ENCODE measurements at regions of chr15 and their contacts with region 1.

Region 1: DNA sequence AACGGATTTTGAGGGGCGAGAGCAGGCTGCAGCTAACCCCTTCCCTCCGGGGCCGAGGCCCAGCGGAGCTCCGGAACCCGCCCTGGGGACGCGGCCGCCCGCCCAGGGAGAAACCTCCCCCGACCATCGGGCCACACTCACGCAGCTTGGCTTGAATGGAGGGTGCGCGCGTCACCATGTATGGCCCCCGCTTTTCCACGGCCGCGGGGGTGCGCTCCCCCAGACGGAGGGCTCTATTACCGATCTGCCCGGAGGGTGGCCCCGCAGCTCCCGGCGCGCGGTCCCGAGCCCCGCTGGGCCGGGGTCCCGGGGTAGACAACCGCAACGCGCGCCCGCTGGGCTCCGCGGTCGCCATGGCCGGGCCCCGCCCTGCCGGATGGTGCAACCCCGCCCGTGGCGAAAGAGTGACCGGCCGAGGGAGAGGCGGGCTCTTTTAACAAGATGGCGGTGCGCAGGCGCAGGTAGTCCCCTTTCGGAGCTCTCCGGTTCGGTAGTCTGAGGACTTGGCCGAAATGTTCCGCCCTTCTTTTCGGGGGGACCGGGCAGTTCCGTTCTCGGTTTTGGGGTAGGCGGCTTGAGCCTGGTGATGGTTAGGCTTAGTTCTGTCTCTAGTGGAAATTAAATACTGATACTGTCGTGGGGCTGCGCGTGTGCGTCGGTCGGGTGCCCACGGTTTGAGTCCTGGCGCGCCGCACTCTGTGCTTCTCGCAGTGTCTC is at the start of gene FAM219B:
- DNase-seq: peak; percentile 84
- H3K4me3 Mint-ChIP-seq: peak within 1 kb of the TSS; percentile 91
- H3K27ac Mint-ChIP-seq: peak within 1 kb of the TSS; percentile 87
- H3K4me1 Mint-ChIP-seq: peaks cover 45% of the 10 kb centered on the region
- H3K27me3 Mint-ChIP-seq: no peaks in the 10 kb centered on the region
- total RNA-seq, gene FAM219B: 103 to 116 TPM

Region 2: GRCh38 chr15:74768771-74769342 is 137.7 kb before region 1 on chr15:
- CTCF ChIA-PET with region 1: interaction called, 50 read pairs
- POLR2A ChIA-PET with region 1: interaction called, 3 read pairs
- DNase-seq: peak; percentile 71
- H3K4me3 Mint-ChIP-seq: no peak overlapping the region
- H3K27ac Mint-ChIP-seq: no peak overlapping the region
- H3K4me1 Mint-ChIP-seq: peaks cover 19% of the 10 kb centered on the region
- H3K27me3 Mint-ChIP-seq: peaks cover 8% of the 10 kb centered on the region

Region 3: DNA sequence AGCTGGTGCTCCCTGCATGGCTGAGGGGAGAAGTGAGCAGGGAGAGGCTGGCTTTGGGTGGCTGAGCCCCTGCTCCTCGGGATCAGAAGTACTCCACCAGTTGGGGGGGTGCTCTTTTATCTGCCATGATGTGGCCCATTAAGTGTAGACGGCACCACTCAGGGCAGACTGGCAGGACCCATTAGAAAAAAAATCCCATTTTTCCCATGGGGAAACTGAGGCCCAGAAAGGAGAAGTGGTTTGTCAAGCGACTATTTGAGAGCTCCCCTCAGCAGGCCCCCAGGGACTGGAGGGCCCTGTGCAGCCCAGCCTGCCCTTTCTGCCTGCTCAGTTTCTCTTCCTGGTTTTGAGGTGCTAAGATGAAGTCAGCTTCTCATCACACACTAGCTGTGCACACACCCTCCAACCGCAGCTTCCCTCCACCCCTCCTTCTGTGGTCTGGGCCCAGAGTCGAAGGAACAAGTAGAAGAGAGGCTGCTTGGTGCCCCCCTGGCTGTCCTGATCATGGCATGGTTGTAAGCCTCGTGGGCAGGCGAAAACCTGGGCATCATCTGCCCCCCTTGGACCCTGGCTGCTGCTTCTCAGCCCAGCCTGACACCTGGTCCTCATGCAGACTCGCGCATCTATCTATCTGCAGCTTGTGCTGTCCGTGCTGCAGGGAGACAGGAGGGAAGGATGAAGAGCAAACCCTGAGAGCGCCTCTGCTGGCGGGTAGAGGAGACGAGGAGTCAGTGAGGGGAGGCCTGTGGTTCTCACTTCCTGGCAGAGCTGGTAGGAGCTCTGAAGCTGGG is 119.2 kb before region 1 on chr15:
- CTCF ChIA-PET with region 1: interaction called, 22 read pairs
- POLR2A ChIA-PET with region 1: interaction called, 16 read pairs
- DNase-seq: peak; percentile 95
- H3K4me3 Mint-ChIP-seq: peak overlapping the region; percentile 85
- H3K27ac Mint-ChIP-seq: peak overlapping the region; percentile 97
- H3K4me1 Mint-ChIP-seq: peaks cover 62% of the 10 kb centered on the region
- H3K27me3 Mint-ChIP-seq: no peaks in the 10 kb centered on the region

Region 4: DNA sequence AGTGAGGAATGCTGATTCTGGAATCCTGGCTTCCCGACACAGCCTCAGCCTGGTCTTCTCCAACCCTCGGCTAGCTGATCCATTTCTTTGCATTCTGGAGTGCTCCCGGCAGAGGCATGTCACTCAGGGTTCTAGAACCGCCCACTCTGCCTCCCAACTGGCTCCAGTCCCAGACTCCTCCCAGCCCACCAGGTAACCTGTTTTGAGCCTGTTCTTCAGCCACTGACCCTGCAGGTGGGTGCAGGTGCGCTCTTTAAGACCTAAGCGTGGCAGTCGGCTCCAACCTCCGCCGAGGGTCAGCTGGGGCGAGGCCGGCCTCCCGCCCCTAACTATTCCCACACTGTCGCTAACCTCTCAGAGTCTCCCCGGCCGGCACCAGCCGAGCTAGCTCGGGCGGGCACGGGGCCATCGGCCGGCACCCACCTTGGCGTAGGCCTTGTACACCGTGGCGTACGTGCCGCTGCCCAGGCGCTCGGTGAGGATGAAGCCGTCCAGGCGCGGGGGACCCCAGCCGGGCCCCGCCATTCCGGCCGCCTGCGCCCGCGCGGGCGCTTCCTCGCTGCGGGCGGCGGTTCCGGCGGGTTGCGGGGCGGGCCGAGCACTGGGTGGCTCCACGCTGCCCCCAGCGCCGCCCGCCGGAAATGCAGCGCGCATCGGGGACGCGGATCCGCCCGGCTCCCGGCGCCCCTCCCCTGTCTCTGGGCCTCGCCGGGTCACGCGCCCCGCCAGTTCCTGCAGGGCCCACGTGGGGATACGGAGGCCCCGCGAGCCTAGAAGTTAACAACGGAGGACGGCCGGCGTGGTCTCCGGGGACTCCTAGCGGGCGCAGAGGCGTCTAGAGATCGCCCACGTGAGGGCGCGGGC is 63.8 kb before region 1 on chr15 and contains the start of gene ULK3:
- CTCF ChIA-PET with region 1: interaction called, 49 read pairs
- POLR2A ChIA-PET with region 1: interaction called, 9 read pairs
- DNase-seq: peak; percentile 95
- H3K4me3 Mint-ChIP-seq: peak within 1 kb of the TSS; percentile 91
- H3K27ac Mint-ChIP-seq: peak within 1 kb of the TSS; percentile 98
- H3K4me1 Mint-ChIP-seq: peaks cover 63% of the 10 kb centered on the region
- H3K27me3 Mint-ChIP-seq: no peaks in the 10 kb centered on the region
- total RNA-seq, gene ULK3: 74.9 to 84.2 TPM

Region 5: DNA sequence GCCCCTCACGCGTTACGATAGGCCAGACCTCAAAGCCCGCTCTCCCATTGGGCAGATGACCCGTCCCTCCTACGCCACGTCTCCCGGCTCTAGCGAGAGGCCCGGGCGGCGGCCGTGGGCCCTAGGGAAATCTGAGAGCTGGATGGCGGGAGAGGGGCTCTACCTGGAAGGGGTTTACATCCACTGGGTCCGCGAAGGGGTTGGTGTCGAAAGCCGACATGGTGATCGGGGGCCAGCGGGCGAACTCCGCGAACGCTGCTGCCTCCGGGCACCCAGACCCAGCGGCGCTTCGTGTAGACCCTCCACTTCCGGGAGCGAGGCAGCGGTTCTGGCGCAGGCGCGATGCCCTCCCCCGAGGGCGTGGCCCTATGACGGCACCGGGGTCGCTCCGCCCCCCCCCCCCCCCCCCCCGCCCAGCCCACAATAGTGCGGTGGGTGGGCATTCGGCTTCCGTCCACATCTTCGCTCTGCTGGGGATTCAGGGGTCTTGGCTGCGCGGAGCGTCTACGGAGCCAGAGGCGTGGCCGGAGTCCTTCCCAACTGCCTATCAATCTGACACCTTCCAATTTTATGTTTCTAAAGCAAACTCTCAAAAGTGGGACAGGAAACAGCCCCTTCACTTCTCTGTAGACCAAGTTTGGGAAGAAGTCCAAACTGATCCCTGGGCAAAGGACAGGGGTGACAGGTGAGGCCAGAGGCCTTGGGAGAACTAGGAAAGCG is 33.4 kb before region 1 on chr15 and contains the start of gene SCAMP2:
- CTCF ChIA-PET with region 1: interaction called, 111 read pairs
- POLR2A ChIA-PET with region 1: interaction called, 121 read pairs
- DNase-seq: peak; percentile 92
- H3K4me3 Mint-ChIP-seq: peak within 1 kb of the TSS; percentile 92
- H3K27ac Mint-ChIP-seq: peak within 1 kb of the TSS; percentile 97
- H3K4me1 Mint-ChIP-seq: peaks cover 48% of the 10 kb centered on the region
- H3K27me3 Mint-ChIP-seq: peaks cover 3% of the 10 kb centered on the region
- total RNA-seq, gene SCAMP2: 144 to 156 TPM

Region 6: GRCh38 chr15:74889883-74890664 is 16.5 kb before region 1 on chr15 and contains the start of gene MPI:
- CTCF ChIA-PET with region 1: interaction called, 24 read pairs
- POLR2A ChIA-PET with region 1: interaction called, 55 read pairs
- DNase-seq: peak; percentile 89
- H3K4me3 Mint-ChIP-seq: peak within 1 kb of the TSS; percentile 84
- H3K27ac Mint-ChIP-seq: peak within 1 kb of the TSS; percentile 69
- H3K4me1 Mint-ChIP-seq: peaks cover 56% of the 10 kb centered on the region
- H3K27me3 Mint-ChIP-seq: no peaks in the 10 kb centered on the region
- total RNA-seq, gene MPI: 82.8 to 92.9 TPM

Region 7: GRCh38 chr15:74937596-74938296 is 31.1 kb after region 1 on chr15 and contains the start of gene COX5A:
- CTCF ChIA-PET with region 1: interaction called, 14 read pairs
- POLR2A ChIA-PET with region 1: interaction called, 7 read pairs
- DNase-seq: peak; percentile 94
- H3K4me3 Mint-ChIP-seq: peak within 1 kb of the TSS; percentile 91
- H3K27ac Mint-ChIP-seq: peak within 1 kb of the TSS; percentile 87
- H3K4me1 Mint-ChIP-seq: peaks cover 42% of the 10 kb centered on the region
- H3K27me3 Mint-ChIP-seq: no peaks in the 10 kb centered on the region
- total RNA-seq, gene COX5A: 273 to 274 TPM

Region 8: GRCh38 chr15:75171408-75171807 is 264.8 kb after region 1 on chr15:
- CTCF ChIA-PET with region 1: no interaction called
- POLR2A ChIA-PET with region 1: no interaction called
- DNase-seq: peak; percentile 73
- H3K4me3 Mint-ChIP-seq: no peak overlapping the region
- H3K27ac Mint-ChIP-seq: peak overlapping the region; percentile 61
- H3K4me1 Mint-ChIP-seq: peaks cover 59% of the 10 kb centered on the region
- H3K27me3 Mint-ChIP-seq: peaks cover 9% of the 10 kb centered on the region